ENCODE measurements at regions of chr17 and their contacts with region 1.

Region 1: GRCh38 chr17:8383143-8383822 is at the start of gene RPL26:
- DNase-seq: peak; percentile 90
- H3K4me3 ChIP-seq: peak within 1 kb of the TSS; percentile 75
- CTCF ChIP-seq: peak; percentile 77

Region 2: GRCh38 chr17:8275421-8276290 is 107.6 kb before region 1 on chr17:
- CTCF ChIA-PET with region 1: no interaction called
- POLR2A ChIA-PET with region 1: no interaction called
- DNase-seq: no peak
- H3K4me3 ChIP-seq: no peak overlapping the region
- CTCF ChIP-seq: no peak

Region 3: DNA sequence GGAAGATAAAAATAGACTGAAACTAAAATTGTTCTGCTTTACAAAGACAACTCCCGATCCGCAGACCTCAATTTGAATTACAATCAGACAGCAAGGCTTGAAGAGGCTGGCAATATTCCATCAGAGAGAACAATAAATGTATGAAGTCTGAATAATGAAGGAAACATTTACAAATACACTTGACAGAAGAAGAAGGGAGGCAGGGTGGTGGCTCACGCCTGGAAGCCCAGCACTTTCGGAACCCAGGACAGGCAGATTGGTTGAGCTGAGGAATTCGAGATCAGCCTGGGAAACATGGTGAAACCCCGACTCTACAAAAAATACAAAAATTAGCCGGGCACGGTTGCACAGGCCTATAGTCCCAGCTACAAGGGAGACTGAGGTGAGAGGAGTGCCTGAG is 29.0 kb before region 1 on chr17:
- CTCF ChIA-PET with region 1: no interaction called
- POLR2A ChIA-PET with region 1: no interaction called
- DNase-seq: no peak
- H3K4me3 ChIP-seq: no peak overlapping the region
- CTCF ChIP-seq: no peak

Region 4: GRCh38 chr17:8369944-8370343 is 13.3 kb before region 1 on chr17:
- CTCF ChIA-PET with region 1: interaction called, 18 read pairs
- POLR2A ChIA-PET with region 1: interaction called, 3 read pairs
- DNase-seq: no peak
- H3K4me3 ChIP-seq: no peak overlapping the region
- CTCF ChIP-seq: no peak

Region 5: GRCh38 chr17:8393420-8394241 is 10.3 kb after region 1 on chr17:
- CTCF ChIA-PET with region 1: interaction called, 10 read pairs
- POLR2A ChIA-PET with region 1: interaction called, 3 read pairs
- DNase-seq: no peak
- H3K4me3 ChIP-seq: no peak overlapping the region
- CTCF ChIP-seq: no peak

Region 6: GRCh38 chr17:8630226-8630801 is 247.0 kb after region 1 on chr17 and contains the start of gene MYH10:
- CTCF ChIA-PET with region 1: no interaction called
- POLR2A ChIA-PET with region 1: no interaction called
- DNase-seq: no peak
- H3K4me3 ChIP-seq: peak within 1 kb of the TSS; percentile 91
- CTCF ChIP-seq: peak; percentile 39